Mammary epithelial cell (primary cell): ENCODE measurements at regions of chr3 and their contacts with region 1.

Region 1: GRCh38 chr3:11944052-11944673 is 60.0 kb upstream of the SYN2 start:
- DNase-seq: peak; percentile 30
- H3K4me3 ChIP-seq: no peak overlapping the region
- H3K27ac ChIP-seq: no peak overlapping the region
- H3K4me1 ChIP-seq: no peaks in the 10 kb centered on the region
- H3K27me3 ChIP-seq: no peaks in the 10 kb centered on the region
- CTCF ChIP-seq: peak; percentile 74 to 86

Region 2: DNA sequence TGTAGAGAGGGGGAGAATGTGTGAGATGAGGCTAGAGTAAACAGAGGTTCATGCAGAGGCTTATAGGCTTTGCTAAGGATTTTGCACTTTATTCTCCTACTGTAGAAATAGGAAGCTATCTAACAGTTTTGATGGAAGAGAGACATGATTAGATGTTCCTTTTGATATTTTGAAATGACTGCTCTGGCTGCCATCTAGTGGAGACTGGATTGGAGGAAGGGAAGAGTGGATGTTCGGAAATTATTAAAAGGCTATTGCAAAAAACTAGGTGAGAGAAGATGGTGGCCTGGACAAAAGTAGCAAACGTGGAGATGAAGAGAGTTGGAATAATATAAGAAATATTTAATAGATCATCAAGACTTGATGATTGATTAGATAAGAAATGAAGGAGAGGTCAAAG is 102.2 kb after region 1 on chr3:
- CTCF ChIA-PET with region 1: interaction called, 5 read pairs
- dilution Hi-C with region 1: no loop called
- in situ Hi-C with region 1: no loop called
- intact Hi-C with region 1: loop called (anchors 5 kb)
- DNase-seq: no peak
- H3K4me3 ChIP-seq: no peak overlapping the region
- H3K27ac ChIP-seq: no peak overlapping the region
- H3K4me1 ChIP-seq: no peaks in the 10 kb centered on the region
- H3K27me3 ChIP-seq: no peaks in the 10 kb centered on the region
- CTCF ChIP-seq: peak in 1 of 2 donors; percentile 41